Left colon (tissue), 2 donors: ENCODE measurements at regions of chr2 and their contacts with region 1.

Region 1: DNA sequence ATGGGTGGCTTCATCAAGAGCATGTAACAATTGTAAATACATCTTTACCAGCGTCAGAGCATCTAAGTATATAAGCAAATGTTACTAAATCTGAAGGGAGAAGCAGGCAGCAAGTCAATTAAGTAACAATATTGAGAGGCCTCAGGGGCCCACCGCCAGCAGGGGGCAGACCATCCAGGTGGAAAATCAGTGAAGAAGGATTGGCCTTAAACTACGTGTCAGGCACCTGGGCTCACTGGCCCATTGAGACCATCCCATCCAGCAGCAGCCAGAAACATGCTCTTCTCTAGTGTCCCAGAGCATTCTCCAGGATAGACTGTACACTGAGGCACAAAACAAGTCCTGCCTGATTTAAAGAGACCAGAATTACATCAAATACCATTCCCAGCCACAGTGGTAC is 96.2 kb upstream of the SNTG2 start:
- DNase-seq: peak in 1 of 2 donors; percentile 68
- ATAC-seq: peak; percentile 65

Region 2: GRCh38 chr2:1010415-1010930 is 156.0 kb after region 1 on chr2:
- intact Hi-C with region 1: no loop called
- DNase-seq: no peak
- ATAC-seq: no peak

Region 3: GRCh38 chr2:1210352-1210751 is 355.9 kb after region 1 on chr2:
- intact Hi-C with region 1: no loop called
- DNase-seq: no peak
- ATAC-seq: no peak

Region 4: DNA sequence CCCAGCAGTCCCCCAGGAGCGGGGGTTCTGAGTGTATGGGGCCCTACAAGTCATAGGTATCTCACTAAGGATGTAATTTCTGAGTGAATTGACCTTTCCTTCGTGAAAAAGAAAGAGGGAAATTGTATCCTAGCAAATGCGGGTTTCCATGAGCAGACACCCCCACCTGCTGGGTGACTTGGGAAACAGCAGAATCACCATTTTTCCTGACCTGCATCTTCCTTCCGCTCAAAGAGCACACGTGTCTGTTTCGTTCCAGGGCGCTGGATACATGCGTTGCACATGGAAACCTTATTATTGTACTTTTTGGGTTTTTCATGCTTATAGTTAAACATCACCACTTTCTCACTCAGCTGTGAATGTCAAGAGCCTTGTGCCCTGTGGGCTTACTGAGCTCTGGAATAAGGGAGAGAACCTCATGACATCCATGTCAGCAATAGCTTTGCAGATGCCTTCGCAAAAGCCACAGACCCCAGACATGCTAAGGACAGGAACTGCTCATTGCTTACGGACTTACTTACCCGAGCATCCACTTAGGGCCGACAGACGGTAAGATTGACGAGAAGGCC is 691.6 kb after region 1 on chr2:
- intact Hi-C with region 1: loop called in 1 of 2 experiments (anchors 10 kb)
- DNase-seq: no peak
- ATAC-seq: peak; percentile 69